Cardiac septum (tissue), 1 donor: ENCODE measurements at regions of chr3 and their contacts with region 1.

Region 1: DNA sequence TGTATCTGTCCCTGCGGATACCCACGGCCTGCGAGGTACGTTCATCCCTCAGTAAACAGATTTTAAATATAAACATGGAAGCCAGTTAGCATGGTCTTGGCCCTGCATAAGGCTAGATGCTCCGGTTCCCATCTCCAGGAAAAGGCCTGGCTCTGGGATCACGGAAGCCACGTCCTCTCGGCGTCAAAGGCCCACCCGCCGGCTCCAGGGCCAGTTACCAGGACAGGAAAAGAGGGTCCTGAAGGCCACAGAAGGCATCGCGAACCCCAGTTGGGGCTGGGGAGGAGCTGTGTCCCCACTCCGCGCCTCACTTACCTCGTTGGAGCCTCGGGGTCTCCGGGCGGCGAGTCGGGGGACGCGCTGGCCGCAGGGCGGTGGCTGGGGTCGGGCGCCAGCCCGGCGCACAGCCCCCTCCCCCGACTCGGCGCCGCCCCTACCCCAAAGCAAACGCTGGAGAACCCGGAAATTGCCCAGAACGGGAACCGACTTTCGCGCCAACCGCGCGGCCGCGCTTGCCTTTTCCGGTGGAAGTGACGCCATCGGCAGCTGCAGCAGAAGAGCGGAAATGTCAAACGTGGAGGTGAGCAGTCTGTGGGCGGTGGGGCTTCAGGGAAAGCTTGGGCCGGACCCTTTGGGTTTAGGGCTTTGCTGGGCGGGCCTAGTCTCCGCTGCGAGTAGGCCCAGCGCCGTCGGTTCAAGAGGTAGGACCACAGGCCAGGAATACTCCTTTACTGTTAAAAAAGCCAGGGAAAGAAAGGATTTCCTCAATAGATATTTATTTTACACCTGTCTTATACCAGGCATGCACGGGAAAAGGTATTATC is at the start of gene TOPBP1:
- DNase-seq: peak; percentile 94
- total RNA-seq, gene TOPBP1: 11.0 TPM

Region 2: GRCh38 chr3:133573054-133573628 is 88.5 kb before region 1 on chr3:
- intact Hi-C with region 1: loop called (anchors 5 kb)
- DNase-seq: peak; percentile 100

Region 3: DNA sequence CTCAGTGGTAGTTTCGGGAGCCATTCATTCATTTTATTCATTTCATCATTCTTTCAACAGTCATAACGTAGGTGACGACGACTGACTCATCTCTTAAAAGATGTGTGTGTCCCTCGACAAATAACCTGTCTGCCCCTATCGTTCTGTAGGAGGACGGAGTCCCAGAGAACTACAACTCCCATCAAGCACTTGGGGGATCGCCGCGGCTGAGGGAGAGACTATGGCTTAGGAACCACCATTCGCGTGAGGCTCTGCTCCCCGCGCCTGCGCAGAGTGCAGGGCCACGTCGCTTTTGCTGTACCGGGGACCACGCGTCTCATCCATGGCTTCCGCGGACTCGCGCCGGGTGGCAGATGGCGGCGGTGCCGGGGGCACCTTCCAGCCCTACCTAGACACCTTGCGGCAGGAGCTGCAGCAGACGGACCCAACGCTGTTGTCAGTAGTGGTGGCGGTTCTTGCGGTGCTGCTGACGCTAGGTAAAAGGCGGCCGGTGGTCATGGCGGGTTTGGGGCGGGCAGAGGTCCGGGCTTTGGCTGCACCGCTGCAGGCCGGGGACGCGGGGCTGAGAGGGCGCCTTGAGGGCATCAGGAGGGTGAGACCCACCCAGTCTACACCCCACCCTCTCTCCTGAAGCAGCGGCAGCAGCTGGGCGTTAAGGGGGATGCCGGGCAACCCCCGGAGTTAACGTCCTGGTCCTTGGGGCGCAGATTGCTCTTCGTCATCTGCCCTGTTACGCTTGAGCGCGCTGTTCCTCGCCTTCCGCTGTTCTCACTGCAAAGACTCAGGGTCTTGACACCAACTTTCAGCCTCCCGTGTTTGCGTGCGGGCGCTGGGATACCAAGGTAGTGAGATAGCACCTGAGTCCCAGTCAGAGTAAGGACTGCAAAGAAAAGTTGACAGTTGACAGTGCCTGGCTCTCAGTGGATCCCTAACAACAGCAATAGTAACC is 144.1 kb after region 1 on chr3 and contains the start of gene SRPRB:
- intact Hi-C with region 1: loop called (anchors 5 kb)
- DNase-seq: peak; percentile 97
- total RNA-seq, gene SRPRB: 27.6 TPM

Region 4: DNA sequence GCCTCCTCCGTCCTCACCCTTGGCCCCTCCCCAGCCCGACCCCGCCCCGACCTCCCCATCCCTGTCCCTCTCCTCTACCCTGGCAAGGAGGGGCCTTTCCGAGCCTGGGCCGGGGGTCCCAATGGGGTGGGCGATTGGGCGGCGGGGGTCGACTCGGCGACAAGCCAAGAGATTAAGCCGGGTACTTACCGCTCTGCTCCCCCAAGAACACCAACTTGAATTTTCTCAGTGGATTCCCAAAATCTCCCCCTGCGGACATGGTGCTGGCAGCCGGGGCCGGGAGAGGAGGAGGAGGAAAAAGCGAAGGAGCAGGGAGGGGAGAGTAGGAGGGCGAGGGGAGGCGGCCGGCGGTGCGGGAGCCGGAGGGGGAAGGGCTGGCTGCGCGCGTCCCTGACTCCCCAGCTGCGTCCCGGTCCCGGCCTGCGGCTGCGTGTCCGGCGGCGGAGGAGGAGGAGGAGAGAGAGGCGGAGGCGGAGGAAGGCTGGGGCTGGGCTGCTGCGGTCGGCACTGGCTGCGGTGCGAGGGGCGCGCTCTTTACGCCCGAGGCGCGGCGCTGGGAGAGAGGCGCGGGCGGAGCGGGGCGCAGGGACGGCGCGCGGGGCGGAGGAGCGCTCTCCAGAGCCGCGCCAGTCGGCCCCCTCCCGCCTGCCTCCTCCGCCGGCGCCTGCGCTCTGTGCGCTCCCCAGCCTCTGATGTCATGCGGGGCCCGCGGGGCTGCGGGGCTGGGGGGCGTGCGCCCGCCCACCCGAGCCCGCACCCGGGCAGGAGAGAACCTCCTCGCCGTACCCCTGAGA is 233.7 kb after region 1 on chr3 and contains the start of gene RAB6B:
- intact Hi-C with region 1: loop called (anchors 10 kb)
- DNase-seq: peak; percentile 72
- total RNA-seq, gene RAB6B: 42.4 TPM

Region 5: GRCh38 chr3:133927540-133928066 is 265.9 kb after region 1 on chr3:
- intact Hi-C with region 1: loop called (anchors 10 kb)
- DNase-seq: no peak

Region 6: GRCh38 chr3:133949438-133949837 is 287.8 kb after region 1 on chr3:
- intact Hi-C with region 1: no loop called
- DNase-seq: no peak

Region 7: GRCh38 chr3:134029734-134030378 is 368.2 kb after region 1 on chr3 and contains the start of gene SLCO2A1:
- intact Hi-C with region 1: no loop called
- DNase-seq: no peak
- total RNA-seq, gene SLCO2A1: 59.2 TPM